ENCODE measurements at regions of chr4 and their contacts with region 1.

Region 1: DNA sequence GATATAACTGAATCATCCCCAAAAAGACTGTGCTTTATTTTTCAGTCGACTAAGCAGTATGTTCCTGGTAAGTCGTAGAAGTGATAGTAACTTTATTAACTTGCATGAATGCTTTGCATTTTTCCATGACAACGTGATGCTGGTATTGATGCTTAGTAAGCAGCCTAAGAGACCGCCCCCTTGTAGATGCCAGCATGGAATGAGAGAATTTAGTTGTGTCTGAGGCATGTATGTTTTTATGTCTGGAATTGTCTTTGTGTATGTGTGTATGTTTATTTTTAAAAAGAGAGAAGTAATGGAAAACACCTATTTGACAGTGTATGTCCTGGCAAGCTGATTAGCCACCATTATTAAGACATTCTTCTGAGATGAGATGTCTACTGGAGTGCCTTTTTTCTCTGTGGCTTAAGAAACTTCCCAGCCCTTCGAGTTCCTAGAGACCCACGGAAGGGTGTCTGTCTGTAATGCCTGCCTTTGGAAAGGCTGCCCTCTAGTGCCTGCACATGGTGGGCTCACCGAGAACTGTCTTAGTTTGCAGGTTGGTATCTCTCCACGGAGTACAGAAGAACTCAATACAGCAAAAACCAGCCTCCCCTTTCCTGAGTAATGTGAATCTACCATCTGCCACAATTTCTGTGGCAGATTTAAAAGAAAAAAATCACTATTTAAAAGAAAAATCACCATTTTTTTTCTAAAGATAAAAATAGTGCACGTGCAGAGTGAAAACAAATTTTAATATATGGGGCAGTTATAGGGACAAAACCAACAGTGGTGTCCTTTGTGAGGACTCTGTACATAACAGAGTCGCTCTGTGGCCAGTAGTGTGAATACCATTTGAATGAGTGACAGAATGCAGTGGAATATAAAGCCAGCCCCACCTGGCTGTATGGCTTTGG is 85.9 kb downstream of the AASDH start:
- DNase-seq: peak; percentile 65
- H3K4me3 ChIP-seq: no peak overlapping the region
- H3K27ac ChIP-seq: no peak overlapping the region
- H3K4me1 ChIP-seq: no peaks in the 10 kb centered on the region
- H3K27me3 ChIP-seq: no peaks in the 10 kb centered on the region
- CTCF ChIP-seq: peak; percentile 95 to 99

Region 2: GRCh38 chr4:55973650-55974049 is 327.8 kb before region 1 on chr4:
- CTCF ChIA-PET with region 1: no interaction called
- dilution Hi-C with region 1: no loop called
- in situ Hi-C with region 1: loop called in 1 of 2 experiments (anchors 25 kb)
- intact Hi-C with region 1: no loop called
- DNase-seq: no peak
- H3K4me3 ChIP-seq: no peak overlapping the region
- H3K27ac ChIP-seq: no peak overlapping the region
- H3K4me1 ChIP-seq: no peaks in the 10 kb centered on the region
- H3K27me3 ChIP-seq: no peaks in the 10 kb centered on the region
- CTCF ChIP-seq: no peak

Region 3: DNA sequence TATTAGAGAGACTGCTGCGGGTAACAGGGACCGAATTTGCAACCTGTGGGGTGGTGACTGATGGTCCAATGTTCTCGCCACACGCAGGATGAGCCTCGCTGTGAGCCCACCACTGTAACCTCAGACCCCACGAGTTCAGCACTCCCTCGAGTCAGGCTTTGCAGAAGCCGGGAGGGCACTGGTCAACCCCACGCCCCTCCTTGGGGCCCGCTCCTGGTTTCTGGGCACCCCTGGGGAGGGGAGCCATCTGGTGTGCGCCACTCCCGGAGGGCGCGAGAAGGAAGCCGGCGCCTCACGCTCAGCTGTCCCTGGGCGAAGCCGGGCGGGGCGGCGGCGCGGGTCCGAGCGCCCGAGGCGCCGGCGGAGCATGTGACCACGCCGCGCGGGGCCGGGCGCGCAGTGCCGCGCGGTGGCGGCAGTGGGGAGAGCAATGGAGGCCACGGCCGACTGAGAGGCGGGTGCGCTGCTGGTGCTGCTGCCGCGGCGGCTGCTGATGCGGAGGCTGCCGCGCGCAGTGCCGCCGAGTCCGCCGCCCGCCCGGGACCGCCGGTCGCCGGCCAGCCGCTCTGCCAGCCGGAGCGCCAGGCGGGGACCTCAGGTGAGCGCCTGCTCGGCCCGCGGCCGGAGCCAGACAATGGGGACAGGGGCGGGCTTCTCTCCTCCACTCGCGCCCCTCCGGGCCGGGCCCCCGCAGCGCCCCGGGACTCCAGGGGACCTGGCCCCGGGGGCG is 252.6 kb before region 1 on chr4:
- CTCF ChIA-PET with region 1: no interaction called
- dilution Hi-C with region 1: no loop called
- in situ Hi-C with region 1: no loop called
- intact Hi-C with region 1: loop called (anchors 1 kb)
- DNase-seq: peak; percentile 31
- H3K4me3 ChIP-seq: peak overlapping the region; percentile 47 to 53 (median 49)
- H3K27ac ChIP-seq: no peak overlapping the region
- H3K4me1 ChIP-seq: peaks cover 10% of the 10 kb centered on the region
- H3K27me3 ChIP-seq: peaks cover 8% of the 10 kb centered on the region
- CTCF ChIP-seq: peak in 1 of 2 donors; percentile 5

Region 4: GRCh38 chr4:56129431-56129861 is 172.0 kb before region 1 on chr4:
- CTCF ChIA-PET with region 1: no interaction called
- dilution Hi-C with region 1: no loop called
- in situ Hi-C with region 1: no loop called
- intact Hi-C with region 1: loop called (anchors 1 kb)
- DNase-seq: peak; percentile 24
- H3K4me3 ChIP-seq: no peak overlapping the region
- H3K27ac ChIP-seq: no peak overlapping the region
- H3K4me1 ChIP-seq: no peaks in the 10 kb centered on the region
- H3K27me3 ChIP-seq: peaks cover 2% of the 10 kb centered on the region
- CTCF ChIP-seq: peak; percentile 67 to 72

Region 5: GRCh38 chr4:56828784-56829535 is 527.5 kb after region 1 on chr4:
- CTCF ChIA-PET with region 1: no interaction called
- dilution Hi-C with region 1: no loop called
- in situ Hi-C with region 1: no loop called
- intact Hi-C with region 1: loop called (anchors 10 kb)
- DNase-seq: peak; percentile 51
- H3K4me3 ChIP-seq: no peak overlapping the region
- H3K27ac ChIP-seq: no peak overlapping the region
- H3K4me1 ChIP-seq: peaks cover 3% of the 10 kb centered on the region
- H3K27me3 ChIP-seq: no peaks in the 10 kb centered on the region
- CTCF ChIP-seq: no peak